H1 (cell line): ENCODE measurements at regions of chr11 and their contacts with region 1.

Region 1: DNA sequence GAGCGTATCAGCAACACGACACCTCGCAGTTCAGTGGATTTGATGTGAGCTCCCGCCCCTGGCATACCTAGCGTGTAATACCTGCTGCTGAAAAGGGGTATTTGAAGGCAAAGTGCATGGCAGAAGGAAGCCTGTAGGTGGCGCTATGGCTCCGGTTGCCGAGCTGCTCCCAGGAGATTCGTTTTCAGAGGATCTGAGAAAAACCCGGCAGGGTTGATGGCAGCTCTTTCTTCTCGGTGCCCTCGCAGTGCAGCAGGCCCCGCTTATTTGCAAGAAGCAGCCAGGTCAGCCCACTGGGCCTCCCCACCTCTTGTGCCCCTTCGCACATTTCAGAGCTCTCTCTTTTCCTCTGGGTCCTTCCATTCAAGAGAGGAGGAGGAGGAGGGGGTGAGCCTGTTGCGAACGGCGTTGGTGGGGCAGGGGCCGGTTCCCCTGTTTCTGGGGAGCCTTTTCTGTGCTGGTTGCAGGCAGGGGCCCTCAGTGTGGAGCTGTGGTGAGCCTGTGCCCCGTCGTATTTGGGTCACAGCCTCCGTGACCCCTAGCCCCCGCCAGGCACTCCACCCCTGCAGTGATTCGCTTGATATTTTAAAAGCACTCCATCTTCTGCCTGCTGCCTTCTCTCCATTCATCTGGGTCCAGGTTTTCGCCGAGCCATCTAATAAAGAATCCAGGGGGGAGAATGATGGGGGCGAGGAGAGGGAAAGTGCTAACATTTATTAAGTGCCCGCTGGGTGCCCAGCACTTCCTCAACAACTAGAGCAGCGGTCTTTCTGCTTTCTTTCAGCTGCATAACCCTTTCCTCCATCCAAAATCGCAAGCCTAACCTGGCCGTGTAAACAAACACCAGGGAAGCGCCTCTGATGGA is 85.3 kb upstream of the SYT13 start:
- DNase-seq: peak; percentile 82 to 96
- H3K4me3 ChIP-seq: peak overlapping the region; percentile 2 to 57 (median 44); a peak in 5 of 8 replicates
- H3K27ac ChIP-seq: no peak overlapping the region
- H3K4me1 ChIP-seq: peaks cover 0 to 5% (median 4%) of the 10 kb centered on the region in 4 experiments
- H3K27me3 ChIP-seq: peaks cover 0 to 3% (median 0%) of the 10 kb centered on the region in 4 experiments; a peak in 5 of 7 replicates
- CTCF ChIP-seq: peak; percentile 88 to 99 (median 91)
- EP300 ChIP-seq: no peak
- POLR2A ChIP-seq: no peak
- RAD21 ChIP-seq: peak; percentile 95 to 96

Region 2: DNA sequence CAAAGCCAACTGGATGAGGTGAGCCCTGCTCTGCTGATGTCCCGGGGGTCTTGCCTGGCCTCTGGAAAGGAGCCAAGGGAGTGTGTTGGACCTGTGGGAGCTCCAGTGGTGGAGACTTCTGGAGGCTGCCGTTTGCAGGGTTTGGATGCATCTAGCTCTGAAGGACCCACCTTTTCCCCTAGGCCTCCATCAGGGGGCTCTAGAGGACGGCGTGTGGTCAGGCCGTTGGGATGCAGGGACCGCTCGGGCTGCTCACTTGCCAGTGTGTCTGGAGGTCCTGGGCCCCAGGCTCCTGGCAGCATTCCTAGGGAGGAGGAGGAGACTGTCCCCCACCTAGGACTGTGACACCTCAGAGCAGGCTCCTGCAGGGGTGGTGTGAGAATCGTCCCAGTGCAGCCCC is 166.7 kb before region 1 on chr11:
- CTCF ChIA-PET with region 1: no interaction called
- POLR2A ChIA-PET with region 1: no interaction called
- DNase-seq: no peak
- H3K4me3 ChIP-seq: no peak overlapping the region
- H3K27ac ChIP-seq: no peak overlapping the region
- H3K4me1 ChIP-seq: peaks cover 3 to 14% (median 7%) of the 10 kb centered on the region in 4 experiments
- H3K27me3 ChIP-seq: no peaks in the 10 kb centered on the region
- CTCF ChIP-seq: peak; percentile 52 to 60 (median 56)
- EP300 ChIP-seq: no peak
- POLR2A ChIP-seq: no peak
- RAD21 ChIP-seq: peak; percentile 58 to 69

Region 3: DNA sequence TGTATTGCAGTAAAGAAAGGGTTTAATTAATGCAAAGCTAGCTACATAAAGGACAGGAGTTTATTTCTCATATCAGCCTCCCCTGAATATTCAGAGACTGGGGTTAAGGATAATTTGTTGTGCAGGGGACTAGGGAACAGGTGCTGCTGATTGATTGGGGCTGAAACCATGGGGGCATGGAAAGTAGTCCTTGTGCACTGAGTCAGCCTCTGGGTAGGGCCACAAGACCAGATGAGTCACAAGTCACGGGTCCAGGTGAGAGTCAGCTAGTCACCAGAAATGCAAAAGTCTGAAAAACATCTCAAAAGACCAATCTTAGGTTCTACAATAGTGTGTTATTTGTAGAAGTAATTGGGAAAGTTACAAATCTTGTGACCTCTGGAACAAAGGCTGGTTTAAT is 52.4 kb before region 1 on chr11:
- CTCF ChIA-PET with region 1: no interaction called
- POLR2A ChIA-PET with region 1: no interaction called
- DNase-seq: no peak
- H3K4me3 ChIP-seq: no peak overlapping the region
- H3K27ac ChIP-seq: no peak overlapping the region
- H3K4me1 ChIP-seq: no peaks in the 10 kb centered on the region; a peak in 1 of 7 replicates
- H3K27me3 ChIP-seq: peaks cover 0 to 2% (median 0%) of the 10 kb centered on the region in 4 experiments; a peak in 1 of 7 replicates
- CTCF ChIP-seq: no peak
- EP300 ChIP-seq: no peak
- POLR2A ChIP-seq: no peak
- RAD21 ChIP-seq: no peak

Region 4: DNA sequence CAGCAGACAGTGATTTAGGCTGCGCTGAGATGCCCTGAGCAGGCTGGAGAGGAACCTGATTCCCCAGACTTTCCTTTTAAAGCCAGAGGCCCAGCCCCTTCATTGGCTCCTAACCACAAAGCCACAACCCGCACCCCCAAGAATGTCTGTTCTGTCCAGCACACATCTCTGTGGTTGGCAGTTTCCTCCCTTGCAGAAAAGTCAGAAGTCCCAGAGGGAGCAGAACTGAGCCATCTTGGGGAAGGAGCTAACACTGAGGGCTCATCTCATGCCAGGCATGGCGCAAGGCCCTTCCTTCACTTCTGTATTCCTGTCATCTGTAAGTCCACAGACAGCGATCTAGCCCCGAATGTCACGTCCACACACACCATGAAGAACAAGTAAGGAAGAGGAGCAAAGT is 11.7 kb after region 1 on chr11:
- CTCF ChIA-PET with region 1: interaction called, 22 read pairs
- POLR2A ChIA-PET with region 1: no interaction called
- DNase-seq: no peak
- H3K4me3 ChIP-seq: no peak overlapping the region
- H3K27ac ChIP-seq: no peak overlapping the region
- H3K4me1 ChIP-seq: peaks cover 0 to 2% (median 0%) of the 10 kb centered on the region in 4 experiments; a peak in 2 of 7 replicates
- H3K27me3 ChIP-seq: no peaks in the 10 kb centered on the region; a peak in 1 of 7 replicates
- CTCF ChIP-seq: no peak
- EP300 ChIP-seq: no peak
- POLR2A ChIP-seq: no peak
- RAD21 ChIP-seq: no peak

Region 5: GRCh38 chr11:45400591-45400990 is 29.1 kb after region 1 on chr11:
- CTCF ChIA-PET with region 1: interaction called, 29 read pairs
- POLR2A ChIA-PET with region 1: no interaction called
- DNase-seq: no peak
- H3K4me3 ChIP-seq: no peak overlapping the region
- H3K27ac ChIP-seq: no peak overlapping the region
- H3K4me1 ChIP-seq: no peaks in the 10 kb centered on the region
- H3K27me3 ChIP-seq: no peaks in the 10 kb centered on the region; a peak in 1 of 7 replicates
- CTCF ChIP-seq: no peak
- EP300 ChIP-seq: no peak
- POLR2A ChIP-seq: no peak
- RAD21 ChIP-seq: no peak

Region 6: GRCh38 chr11:45468262-45468856 is 96.9 kb after region 1 on chr11:
- CTCF ChIA-PET with region 1: interaction called, 10 read pairs
- POLR2A ChIA-PET with region 1: no interaction called
- DNase-seq: peak in 1 of 2 experiments; percentile 49
- H3K4me3 ChIP-seq: no peak overlapping the region
- H3K27ac ChIP-seq: no peak overlapping the region
- H3K4me1 ChIP-seq: peaks cover 0 to 4% (median 2%) of the 10 kb centered on the region in 4 experiments; a peak in 5 of 7 replicates
- H3K27me3 ChIP-seq: no peaks in the 10 kb centered on the region; a peak in 1 of 7 replicates
- CTCF ChIP-seq: no peak
- EP300 ChIP-seq: no peak
- POLR2A ChIP-seq: no peak
- RAD21 ChIP-seq: peak in 1 of 2 experiments; percentile 27; a peak in 1 of 4 replicates